ENCODE measurements at regions of chr6 and their contacts with region 1.

Region 1: DNA sequence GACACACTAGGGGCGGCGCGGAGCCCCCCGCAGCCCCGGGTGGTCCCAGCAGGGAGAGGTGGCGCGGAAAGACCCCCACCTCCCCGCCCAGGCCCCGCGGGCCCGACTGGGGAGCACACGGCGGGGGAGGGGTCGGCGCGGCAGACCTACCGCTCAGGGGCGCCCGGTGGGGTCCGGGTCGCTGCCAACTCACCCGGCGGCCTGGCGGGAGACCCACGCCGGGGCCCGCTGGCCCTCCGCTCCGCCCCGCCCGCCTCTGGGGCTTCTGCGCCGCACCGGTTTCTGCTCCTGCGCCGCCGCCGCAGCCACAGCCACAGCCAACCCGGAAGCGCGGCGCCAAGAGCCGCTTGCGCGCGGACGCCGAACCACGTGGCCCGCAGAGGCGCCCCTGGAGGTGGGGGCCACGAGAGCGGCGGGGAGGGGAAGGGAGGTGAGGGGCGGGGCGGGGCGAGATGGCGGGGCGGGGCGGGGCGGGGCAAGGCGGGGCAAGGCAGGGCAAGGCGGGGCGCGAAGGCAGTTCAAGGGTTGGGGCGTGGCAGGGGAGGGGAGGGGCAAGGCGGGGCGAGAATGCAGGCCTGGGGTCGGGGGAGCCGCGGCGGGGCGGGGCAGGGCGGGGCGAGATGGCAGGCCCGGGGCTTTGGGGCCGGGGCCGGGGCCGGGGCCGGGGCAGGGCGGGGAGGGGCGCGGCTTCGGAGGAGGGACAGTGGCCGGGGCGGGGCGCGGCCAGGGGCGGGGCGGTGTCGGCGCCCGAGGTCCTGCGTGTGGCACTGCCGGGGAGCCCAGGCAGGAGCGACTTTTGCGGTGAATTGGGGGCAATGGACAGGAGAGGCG is at the start of gene ZBTB24:
- DNase-seq: peak; percentile 86 to 92 (median 89)
- ATAC-seq: peak; percentile 94
- H3K4me3 ChIP-seq: peak within 1 kb of the TSS; percentile 79
- H3K4me3 Mint-ChIP-seq: peak within 1 kb of the TSS; percentile 92 to 99 (median 97)
- H3K27ac ChIP-seq: peak within 1 kb of the TSS; percentile 84
- H3K27ac Mint-ChIP-seq: peak within 1 kb of the TSS; percentile 42 to 95 (median 91)
- H3K4me1 ChIP-seq: peaks cover 38 to 39% of the 10 kb centered on the region in 2 donors
- H3K4me1 Mint-ChIP-seq: peaks cover 38 to 55% (median 51%) of the 10 kb centered on the region in 7 donors
- H3K27me3 ChIP-seq: no peaks in the 10 kb centered on the region
- H3K27me3 Mint-ChIP-seq: peaks cover 0 to 7% (median 0%) of the 10 kb centered on the region in 5 donors
- total RNA-seq, gene ZBTB24: 10.2 to 26.6 (median 23.4) TPM

Region 2: DNA sequence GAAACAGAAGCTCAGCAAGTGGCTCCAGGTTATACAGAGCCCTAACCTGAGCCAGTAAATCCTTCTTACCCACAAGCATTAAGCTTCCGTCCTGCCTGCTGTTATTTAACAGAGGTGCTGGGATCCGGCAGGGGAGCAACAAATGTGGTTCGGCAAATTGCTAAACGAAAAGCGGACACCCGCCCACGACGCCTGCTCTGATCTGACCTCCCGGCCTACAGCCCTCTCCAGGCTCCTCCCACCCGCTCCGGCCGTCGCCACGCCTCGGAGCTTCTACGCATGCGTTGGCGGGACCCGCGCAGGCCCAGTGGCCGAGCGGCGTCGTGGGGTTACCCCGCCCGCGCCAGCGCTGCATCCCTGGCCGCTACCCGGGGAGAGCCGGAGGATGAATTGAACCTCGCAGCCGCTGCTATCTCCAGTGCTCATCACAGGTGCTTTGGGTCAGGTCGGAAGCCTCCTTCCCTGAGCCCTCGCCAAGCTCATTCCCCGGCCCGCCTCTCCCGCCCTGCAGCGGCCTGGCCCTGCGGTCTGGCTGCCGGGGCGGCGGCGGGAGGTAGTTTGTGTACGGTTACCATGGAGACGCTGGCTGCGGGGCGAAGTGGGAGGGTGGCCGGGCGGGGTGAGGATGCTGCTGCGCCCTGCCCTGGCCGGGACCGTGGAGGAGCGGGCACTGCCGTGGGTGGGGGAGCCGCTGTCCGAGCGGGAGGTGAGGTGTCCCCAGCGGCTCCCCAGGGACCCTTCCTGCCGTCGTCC is 634.8 kb before region 1 on chr6 and contains the start of gene ARMC2:
- CTCF ChIA-PET with region 1: no interaction called
- POLR2A ChIA-PET with region 1: no interaction called
- intact Hi-C with region 1: loop called in 1 of 2 experiments (anchors 2 kb)
- DNase-seq: peak; percentile 72 to 95 (median 79)
- ATAC-seq: peak; percentile 94
- H3K4me3 ChIP-seq: peak within 1 kb of the TSS; percentile 90
- H3K4me3 Mint-ChIP-seq: peak within 1 kb of the TSS; percentile 75 to 93 (median 88)
- H3K27ac ChIP-seq: peak within 1 kb of the TSS; percentile 69
- H3K27ac Mint-ChIP-seq: peak within 1 kb of the TSS; percentile 72 to 93 (median 85)
- H3K4me1 ChIP-seq: peaks cover 6 to 13% of the 10 kb centered on the region in 2 donors
- H3K4me1 Mint-ChIP-seq: peaks cover 11 to 39% (median 29%) of the 10 kb centered on the region in 7 donors
- H3K27me3 ChIP-seq: no peaks in the 10 kb centered on the region
- H3K27me3 Mint-ChIP-seq: peaks cover 0 to 36% (median 0%) of the 10 kb centered on the region in 5 donors
- total RNA-seq, gene ARMC2: 6.2 to 12.7 (median 7.9) TPM

Region 3: GRCh38 chr6:109349419-109350078 is 133.6 kb before region 1 on chr6:
- CTCF ChIA-PET with region 1: no interaction called
- POLR2A ChIA-PET with region 1: no interaction called
- intact Hi-C with region 1: no loop called
- DNase-seq: no peak
- ATAC-seq: peak; percentile 53
- H3K4me3 ChIP-seq: no peak overlapping the region
- H3K4me3 Mint-ChIP-seq: no peak overlapping the region
- H3K27ac ChIP-seq: no peak overlapping the region
- H3K27ac Mint-ChIP-seq: peak overlapping the region in 4 of 9 donors; percentile 6 to 32 (median 18)
- H3K4me1 ChIP-seq: no peaks in the 10 kb centered on the region
- H3K4me1 Mint-ChIP-seq: peaks cover 14 to 26% (median 18%) of the 10 kb centered on the region in 7 donors
- H3K27me3 ChIP-seq: no peaks in the 10 kb centered on the region
- H3K27me3 Mint-ChIP-seq: no peaks in the 10 kb centered on the region

Region 4: GRCh38 chr6:109455502-109456282 is 27.4 kb before region 1 on chr6 and contains the start of gene MICAL1:
- CTCF ChIA-PET with region 1: interaction called, 3 read pairs
- POLR2A ChIA-PET with region 1: interaction called, 58 read pairs
- intact Hi-C with region 1: loop called (anchors 1 kb)
- DNase-seq: peak; percentile 55 to 79 (median 72)
- ATAC-seq: peak; percentile 82
- H3K4me3 ChIP-seq: peak within 1 kb of the TSS; percentile 81
- H3K4me3 Mint-ChIP-seq: peak within 1 kb of the TSS; percentile 95 to 99 (median 97)
- H3K27ac ChIP-seq: peak within 1 kb of the TSS; percentile 94
- H3K27ac Mint-ChIP-seq: peak within 1 kb of the TSS; percentile 83 to 99 (median 97)
- H3K4me1 ChIP-seq: peaks cover 40 to 45% of the 10 kb centered on the region in 2 donors
- H3K4me1 Mint-ChIP-seq: peaks cover 29 to 68% (median 62%) of the 10 kb centered on the region in 7 donors
- H3K27me3 ChIP-seq: no peaks in the 10 kb centered on the region
- H3K27me3 Mint-ChIP-seq: no peaks in the 10 kb centered on the region
- total RNA-seq, gene MICAL1: 61.4 to 125 (median 78.7) TPM

Region 5: GRCh38 chr6:109526905-109527628 is 43.9 kb after region 1 on chr6:
- CTCF ChIA-PET with region 1: no interaction called
- POLR2A ChIA-PET with region 1: no interaction called
- intact Hi-C with region 1: loop called in 1 of 2 experiments (anchors 2 kb)
- DNase-seq: peak; percentile 7 to 70 (median 59)
- ATAC-seq: peak; percentile 79
- H3K4me3 ChIP-seq: no peak overlapping the region
- H3K4me3 Mint-ChIP-seq: no peak overlapping the region
- H3K27ac ChIP-seq: no peak overlapping the region
- H3K27ac Mint-ChIP-seq: peak overlapping the region in 1 of 9 donors; percentile 86
- H3K4me1 ChIP-seq: no peaks in the 10 kb centered on the region
- H3K4me1 Mint-ChIP-seq: peaks cover 0 to 4% (median 0%) of the 10 kb centered on the region in 7 donors
- H3K27me3 ChIP-seq: no peaks in the 10 kb centered on the region
- H3K27me3 Mint-ChIP-seq: peaks cover 0 to 6% (median 0%) of the 10 kb centered on the region in 5 donors

Measured in naive thymus-derived CD4-positive, alpha-beta T cell (primary cell).